Psoas muscle (tissue), 8 donors: ENCODE measurements at regions of chr6 and their contacts with region 1.

Region 1: DNA sequence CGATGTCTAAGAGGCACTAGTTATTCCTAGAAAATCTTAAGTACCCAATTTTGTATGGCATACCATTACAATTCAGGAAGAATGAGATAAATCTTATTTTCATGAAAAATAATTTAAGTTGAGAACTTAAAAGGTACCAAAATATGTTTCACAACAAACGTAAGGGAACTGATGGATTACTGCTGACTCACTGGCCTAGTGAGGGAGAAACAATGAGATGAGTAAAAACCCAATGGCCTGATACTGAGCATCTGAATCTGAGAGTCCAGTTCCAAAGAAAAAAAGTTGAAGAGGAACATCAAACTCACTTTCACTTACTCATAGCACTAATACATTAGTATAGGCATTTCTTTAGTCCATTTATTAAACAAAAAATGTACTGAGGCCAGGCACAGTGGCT is 56.0 kb downstream of the MDN1 start:
- DNase-seq: no peak
- ATAC-seq: no peak
- H3K4me3 ChIP-seq: no peak overlapping the region
- H3K27ac ChIP-seq: no peak overlapping the region
- H3K4me1 ChIP-seq: no peaks in the 10 kb centered on the region
- H3K27me3 ChIP-seq: no peaks in the 10 kb centered on the region
- CTCF ChIP-seq: no peak

Region 2: GRCh38 chr6:89655122-89655521 is 108.4 kb before region 1 on chr6:
- intact Hi-C with region 1: loop called in 1 of 2 experiments (anchors 10 kb)
- DNase-seq: no peak
- ATAC-seq: no peak
- H3K4me3 ChIP-seq: no peak overlapping the region
- H3K27ac ChIP-seq: no peak overlapping the region
- H3K4me1 ChIP-seq: peaks cover under 1% of the 10 kb centered on the region
- H3K27me3 ChIP-seq: no peaks in the 10 kb centered on the region
- CTCF ChIP-seq: no peak